Activated CD4-positive, alpha-beta T cell treated with anti-CD3 and anti-CD28 coated beads, Interleukin-2, amount 10 ng/mL, durations not matched to agents 24 days and 14 days (primary cell): ENCODE measurements at regions of chr1 and their contacts with region 1.

Region 1: DNA sequence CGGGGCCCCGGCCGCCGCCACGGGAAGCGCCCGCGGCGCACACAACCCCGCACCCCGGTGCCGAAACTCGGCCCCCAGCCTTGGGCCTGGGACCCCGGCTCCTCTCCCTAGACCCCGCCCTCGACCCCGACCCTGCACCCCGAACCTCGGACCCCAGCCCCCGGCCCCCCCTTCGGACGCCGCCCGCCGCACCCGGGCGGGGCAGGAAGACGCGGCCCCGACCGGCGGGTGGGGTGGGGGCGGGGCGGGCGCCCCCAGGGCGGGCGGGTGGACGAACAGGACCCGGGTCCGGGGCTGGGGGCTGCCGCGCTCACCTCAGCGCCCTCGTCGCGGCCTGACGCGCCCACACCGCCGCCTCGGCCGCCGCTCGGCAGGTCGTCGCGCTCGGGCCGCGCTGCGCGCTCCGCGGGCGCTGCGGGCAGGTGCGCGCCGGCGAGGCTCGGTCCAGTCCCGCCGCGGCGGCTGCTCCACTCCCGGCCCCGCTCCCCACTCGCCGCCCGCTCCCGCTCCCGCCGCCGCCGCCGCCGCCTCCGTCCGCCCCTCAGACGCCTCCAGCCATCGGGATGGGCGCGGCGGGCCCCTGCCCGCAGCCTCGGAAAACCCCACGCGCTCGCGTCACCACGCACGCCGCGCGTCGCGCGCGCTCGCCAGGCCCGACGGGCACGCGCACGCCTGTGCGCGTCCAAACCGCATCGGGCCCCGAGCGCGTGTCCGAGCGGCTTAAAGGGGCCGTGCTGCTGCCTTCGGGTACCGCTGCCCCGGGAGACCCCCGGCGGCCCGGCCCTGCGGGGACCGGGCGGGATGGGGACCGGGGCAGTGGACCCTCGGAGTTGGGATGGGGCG is at the start of gene GNB1:
- DNase-seq: peak; percentile 98
- H3K4me3 Mint-ChIP-seq: peak within 1 kb of the TSS; percentile 90
- H3K27ac Mint-ChIP-seq: peak within 1 kb of the TSS; percentile 93
- H3K4me1 Mint-ChIP-seq: peaks cover 37% of the 10 kb centered on the region
- H3K27me3 Mint-ChIP-seq: peaks cover 3% of the 10 kb centered on the region
- total RNA-seq, gene GNB1: 403 and 422 TPM in 2 replicates

Region 2: DNA sequence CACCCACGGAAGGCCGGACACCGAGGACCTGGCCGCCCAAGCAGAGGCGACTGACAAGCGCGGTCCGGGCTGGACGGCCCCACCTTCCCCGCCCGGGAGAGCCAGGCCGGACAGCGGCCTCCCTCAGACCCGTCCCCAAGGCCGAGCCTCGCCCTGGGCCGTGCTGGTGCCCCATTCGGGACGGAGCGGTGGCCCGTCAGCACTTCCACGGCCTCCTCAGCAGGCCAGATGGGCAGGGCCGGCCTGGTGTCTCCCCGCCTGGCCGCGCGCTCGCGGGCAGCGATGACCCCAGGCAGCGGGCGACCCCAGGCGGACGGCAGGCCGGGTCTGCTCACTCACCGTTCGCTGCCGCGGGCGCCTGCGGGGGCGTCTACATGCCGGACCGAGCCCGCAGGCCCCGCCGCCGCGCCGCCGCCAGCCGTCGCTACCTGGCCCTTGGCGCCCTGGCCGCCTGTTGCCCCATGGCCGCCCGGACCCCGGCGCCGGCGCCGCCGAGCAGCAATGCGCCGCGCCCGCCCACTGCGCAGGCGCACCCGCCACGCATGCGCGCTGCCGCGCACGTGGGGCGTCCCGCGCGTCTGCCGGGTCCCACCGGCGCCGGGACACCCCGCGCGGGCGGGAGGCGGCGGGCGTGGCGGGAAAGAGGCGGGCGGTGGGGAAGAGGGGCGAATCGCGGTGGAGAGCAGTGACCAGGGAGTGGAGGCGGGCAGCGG is 112.6 kb before region 1 on chr1 and contains the start of gene NADK:
- intact Hi-C with region 1: loop called (anchors 5 kb)
- DNase-seq: peak; percentile 96
- H3K4me3 Mint-ChIP-seq: peak within 1 kb of the TSS; percentile 81
- H3K27ac Mint-ChIP-seq: peak within 1 kb of the TSS; percentile 91
- H3K4me1 Mint-ChIP-seq: peaks cover 53% of the 10 kb centered on the region
- H3K27me3 Mint-ChIP-seq: no peaks in the 10 kb centered on the region
- total RNA-seq, gene NADK: 91.3 and 94.5 TPM in 2 replicates

Region 3: DNA sequence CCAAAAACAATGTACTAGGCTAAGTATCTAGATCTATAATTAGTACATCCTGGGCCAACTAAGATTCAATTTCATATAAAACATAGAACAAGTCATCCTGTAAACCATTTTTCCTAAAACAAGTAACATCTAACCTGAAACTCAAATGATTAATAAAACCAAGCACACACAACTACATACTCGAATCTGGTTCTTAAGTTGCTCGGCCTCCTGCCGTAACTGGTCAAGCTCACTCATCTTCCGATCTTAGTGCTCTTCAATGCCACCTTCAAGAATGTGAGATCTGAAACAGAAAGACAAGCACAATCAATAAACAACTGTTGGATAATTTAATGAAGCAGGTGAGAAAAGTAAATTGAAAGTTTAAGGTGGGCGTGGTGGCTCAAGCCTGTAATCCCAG is 65.5 kb before region 1 on chr1:
- intact Hi-C with region 1: loop called (anchors 2 kb)
- DNase-seq: no peak
- H3K4me3 Mint-ChIP-seq: peak overlapping the region; percentile 2
- H3K27ac Mint-ChIP-seq: peak overlapping the region; percentile 55
- H3K4me1 Mint-ChIP-seq: peaks cover 24% of the 10 kb centered on the region
- H3K27me3 Mint-ChIP-seq: no peaks in the 10 kb centered on the region